ENCODE measurements at regions of chr16 and their contacts with region 1.

Region 1: DNA sequence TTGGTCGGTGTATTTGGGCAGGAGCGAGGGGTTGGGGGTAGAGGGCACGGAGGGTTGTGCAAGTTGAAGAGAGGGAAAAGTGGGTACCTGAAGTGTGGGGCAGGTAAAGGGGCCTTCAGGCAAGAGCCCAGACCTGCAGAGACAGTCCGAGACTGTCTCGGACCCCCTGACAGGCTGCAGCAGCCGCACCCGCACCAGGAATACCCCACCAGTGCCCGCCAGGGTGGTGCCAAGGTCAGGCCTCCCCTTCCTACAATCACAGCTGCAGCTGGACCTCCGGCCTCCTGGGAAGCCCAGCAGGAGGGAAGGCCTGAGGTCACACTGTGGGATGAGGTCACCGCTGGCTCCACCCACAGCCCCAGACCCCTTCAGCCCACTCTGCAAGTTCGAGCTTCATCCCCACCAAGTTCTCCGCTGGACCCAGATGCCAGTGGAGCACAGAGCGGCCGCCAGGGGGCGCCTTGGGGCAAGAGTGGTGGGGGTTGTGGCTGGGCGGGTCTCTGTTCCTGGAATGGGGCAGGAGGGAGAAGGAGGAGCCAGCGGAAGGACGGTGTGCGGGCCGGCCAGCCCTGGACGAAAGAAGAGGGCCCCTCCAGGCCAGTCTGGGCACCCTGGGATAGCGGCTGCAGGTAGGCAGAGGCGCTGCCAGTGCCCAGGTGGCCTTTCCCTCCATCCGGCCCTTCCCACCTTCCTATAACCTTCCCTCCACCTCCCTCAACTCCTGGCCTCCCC is at the start of gene HSD3B7:
- DNase-seq: peak; percentile 95
- ATAC-seq: peak; percentile 85
- H3K4me3 Mint-ChIP-seq: peak within 1 kb of the TSS; percentile 61
- H3K27ac Mint-ChIP-seq: 0 out of 2 replicates have a peak within 1 kb of the TSS, but pooled peaks have one; percentile 27
- H3K4me1 Mint-ChIP-seq: peaks cover 6% of the 10 kb centered on the region
- H3K27me3 Mint-ChIP-seq: no peaks in the 10 kb centered on the region
- CTCF ChIP-seq: peak; percentile 97
- total RNA-seq, gene HSD3B7: 4.1 to 4.5 TPM (median 4.5 TPM) in 3 replicates

Region 2: DNA sequence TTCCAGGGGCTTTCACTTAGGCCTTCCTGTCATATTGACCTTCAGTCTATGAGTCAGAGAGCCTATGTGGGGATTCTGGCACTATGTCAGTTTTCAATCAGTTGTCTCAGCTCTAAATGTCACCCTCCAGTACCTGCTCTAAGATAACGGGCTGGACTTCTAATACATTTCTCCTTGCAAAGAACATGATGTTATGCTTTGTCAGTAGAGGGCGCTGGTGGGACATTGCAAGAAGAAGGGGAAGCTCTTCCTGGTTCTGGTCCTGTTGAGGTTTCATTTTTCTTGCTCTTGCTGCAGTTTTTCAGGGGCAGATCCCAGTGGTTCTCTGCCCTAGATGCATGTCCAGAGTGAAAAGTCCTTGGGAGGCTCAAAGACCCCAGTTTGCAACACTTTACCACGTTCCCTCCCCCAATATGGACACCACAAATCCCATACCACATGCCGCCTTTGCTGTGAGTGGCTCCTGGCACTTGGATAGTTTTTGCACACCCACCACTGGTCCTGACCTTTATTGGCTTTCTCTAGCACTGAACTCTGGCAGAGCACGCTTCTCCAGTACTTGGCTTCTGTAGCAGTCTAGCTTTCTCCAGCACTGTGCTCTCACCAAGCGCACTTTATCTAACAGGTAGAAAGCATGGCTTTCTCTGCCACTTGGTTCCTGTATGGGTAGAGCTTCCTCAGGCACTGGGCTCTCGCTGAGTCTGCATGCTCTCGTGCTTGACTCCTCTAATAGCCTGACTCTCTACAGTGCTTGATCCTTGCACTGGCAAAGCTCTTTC is 140.0 kb before region 1 on chr16:
- CTCF ChIA-PET with region 1: no interaction called
- POLR2A ChIA-PET with region 1: no interaction called
- DNase-seq: peak; percentile 78
- ATAC-seq: peak; percentile 82
- H3K4me3 Mint-ChIP-seq: no peak overlapping the region
- H3K27ac Mint-ChIP-seq: no peak overlapping the region
- H3K4me1 Mint-ChIP-seq: peaks cover 4% of the 10 kb centered on the region
- H3K27me3 Mint-ChIP-seq: peaks cover 34% of the 10 kb centered on the region
- CTCF ChIP-seq: peak; percentile 56; the same call in 1 of the 2 replicates

Region 3: GRCh38 chr16:30912794-30913412 is 71.9 kb before region 1 on chr16:
- CTCF ChIA-PET with region 1: no interaction called
- POLR2A ChIA-PET with region 1: no interaction called
- DNase-seq: no peak
- ATAC-seq: no peak
- H3K4me3 Mint-ChIP-seq: no peak overlapping the region
- H3K27ac Mint-ChIP-seq: no peak overlapping the region
- H3K4me1 Mint-ChIP-seq: peaks cover 10% of the 10 kb centered on the region
- H3K27me3 Mint-ChIP-seq: no peaks in the 10 kb centered on the region; the same call in 1 of the 2 replicates
- CTCF ChIP-seq: no peak

Region 4: DNA sequence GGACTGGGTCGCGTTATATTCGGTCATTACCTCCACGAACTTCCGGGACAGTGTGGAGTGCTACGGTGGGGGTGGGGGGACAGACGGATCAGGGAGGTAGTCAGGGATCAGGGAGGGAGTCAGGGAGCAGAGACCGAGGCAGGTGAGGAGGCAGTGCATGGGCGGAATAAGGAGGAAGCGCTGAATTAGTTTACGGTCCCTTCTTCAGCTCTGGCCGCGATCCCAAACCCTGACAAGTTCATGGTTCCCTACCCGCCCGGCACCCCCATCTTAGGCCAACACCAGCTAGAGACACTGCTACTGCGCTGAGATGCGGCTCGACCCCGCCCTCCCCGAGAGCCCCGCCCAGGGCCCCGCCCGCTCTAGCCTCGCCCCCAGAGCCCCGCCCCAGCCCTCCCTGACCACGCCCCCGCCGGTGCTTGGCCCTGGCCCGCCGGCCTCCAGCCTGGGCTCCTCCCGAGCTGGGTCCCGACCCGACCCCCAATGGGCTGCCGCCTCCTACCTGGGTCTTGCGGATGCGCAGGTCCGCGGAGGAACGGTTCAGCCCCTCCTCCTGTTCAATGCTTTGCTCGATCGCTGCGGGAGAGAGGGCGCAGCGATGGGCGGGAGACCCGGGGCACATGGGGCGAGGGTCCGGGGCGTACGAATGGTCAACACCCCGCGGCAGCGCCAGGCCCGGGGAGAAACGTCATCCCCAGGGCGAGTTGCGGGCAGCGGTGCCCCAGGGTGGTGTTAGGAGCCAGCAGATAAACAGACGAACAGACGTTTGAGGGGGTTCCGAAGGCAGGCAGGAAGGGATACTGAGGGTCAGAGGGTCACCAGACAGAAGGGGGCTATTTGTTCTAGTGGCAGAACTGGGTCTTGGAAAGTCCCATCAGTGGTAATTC is 12.4 kb after region 1 on chr16:
- CTCF ChIA-PET with region 1: interaction called, 79 read pairs
- POLR2A ChIA-PET with region 1: interaction called, 6 read pairs
- DNase-seq: peak; percentile 87
- ATAC-seq: peak; percentile 89
- H3K4me3 Mint-ChIP-seq: peak overlapping the region; percentile 70
- H3K27ac Mint-ChIP-seq: no peak overlapping the region; the same call in 1 of the 2 replicates
- H3K4me1 Mint-ChIP-seq: peaks cover 16% of the 10 kb centered on the region
- H3K27me3 Mint-ChIP-seq: peaks cover 7% of the 10 kb centered on the region; the same call in 1 of the 2 replicates
- CTCF ChIP-seq: no peak

Region 5: DNA sequence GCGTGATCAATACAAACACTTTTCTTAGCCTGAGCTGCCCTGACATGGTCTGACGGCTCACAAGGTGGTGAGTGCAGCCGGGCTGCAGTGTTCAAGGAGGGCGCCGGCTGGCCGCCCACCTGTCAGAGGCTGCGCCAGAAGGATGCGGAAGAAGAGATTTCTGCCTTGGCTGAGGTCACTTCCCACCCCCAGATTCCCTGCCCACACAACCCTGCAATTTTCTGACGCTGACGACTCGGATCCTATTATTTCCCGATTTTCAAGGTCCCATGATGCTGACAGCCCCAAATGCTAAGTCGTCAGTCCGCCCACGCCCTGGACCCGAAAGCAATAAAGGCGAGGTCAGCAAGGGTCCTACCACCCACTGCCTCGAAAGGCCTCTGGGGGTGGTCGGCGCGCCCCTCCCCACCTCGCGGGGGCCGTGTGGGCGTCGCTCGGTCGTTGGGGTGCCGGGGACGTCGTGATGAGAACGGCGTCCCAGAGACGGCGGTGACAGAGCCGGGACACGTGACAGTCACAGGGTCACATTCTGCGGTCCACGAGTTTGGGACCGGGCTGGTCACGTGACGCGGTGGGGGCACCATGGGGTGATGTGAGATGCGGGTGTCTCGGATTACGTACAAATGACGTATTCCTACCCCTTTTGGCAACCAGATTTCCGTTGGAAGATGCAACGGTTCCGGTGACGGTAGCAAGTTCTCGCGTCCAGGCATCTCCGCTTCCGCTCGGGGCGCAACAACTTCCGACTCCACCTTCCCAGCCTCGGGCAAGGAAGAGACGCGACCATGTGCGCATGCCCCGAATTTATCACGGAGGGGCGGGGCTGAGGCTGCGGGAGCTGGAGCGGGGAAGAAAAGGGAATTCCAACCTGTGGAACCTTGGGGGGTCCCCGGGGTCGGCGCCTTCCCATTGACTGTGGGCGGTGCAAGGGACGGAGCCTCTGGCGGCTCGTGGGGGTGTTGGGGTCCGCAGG is 48.2 kb after region 1 on chr16 and contains the start of gene STX4:
- CTCF ChIA-PET with region 1: interaction called, 16 read pairs
- POLR2A ChIA-PET with region 1: interaction called, 3 read pairs
- DNase-seq: peak; percentile 96
- ATAC-seq: peak; percentile 86
- H3K4me3 Mint-ChIP-seq: peak within 1 kb of the TSS; percentile 90
- H3K27ac Mint-ChIP-seq: peak within 1 kb of the TSS; percentile 70
- H3K4me1 Mint-ChIP-seq: no peaks in the 10 kb centered on the region
- H3K27me3 Mint-ChIP-seq: no peaks in the 10 kb centered on the region; the same call in 1 of the 2 replicates
- CTCF ChIP-seq: no peak
- total RNA-seq, gene STX4: 31.3 to 38.4 TPM (median 32.5 TPM) in 3 replicates

Region 6: DNA sequence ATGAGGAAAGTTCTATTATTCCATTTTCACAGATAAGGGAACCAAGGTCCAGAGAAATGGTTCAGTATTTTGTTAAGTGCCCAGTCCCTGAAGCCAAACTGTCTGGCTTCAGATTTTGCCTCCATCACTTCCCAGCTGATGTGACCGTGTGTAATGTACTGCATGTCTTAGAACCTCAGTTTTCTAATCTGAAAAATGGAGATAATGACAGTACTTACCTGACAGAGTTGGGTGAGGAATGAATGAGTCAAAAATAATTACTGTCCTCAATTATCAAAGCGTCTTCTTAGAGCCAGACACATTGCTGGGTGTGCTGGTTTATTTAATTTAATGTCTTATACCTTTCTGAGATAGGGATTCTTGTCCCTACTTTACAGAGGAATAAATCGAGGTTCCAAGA is 82.5 kb after region 1 on chr16:
- CTCF ChIA-PET with region 1: interaction called, 10 read pairs
- POLR2A ChIA-PET with region 1: no interaction called
- DNase-seq: no peak
- ATAC-seq: no peak
- H3K4me3 Mint-ChIP-seq: no peak overlapping the region
- H3K27ac Mint-ChIP-seq: no peak overlapping the region
- H3K4me1 Mint-ChIP-seq: peaks cover 8% of the 10 kb centered on the region
- H3K27me3 Mint-ChIP-seq: no peaks in the 10 kb centered on the region
- CTCF ChIP-seq: no peak

Region 7: GRCh38 chr16:31117391-31118197 is 132.8 kb after region 1 on chr16 and contains the start of gene KAT8:
- CTCF ChIA-PET with region 1: interaction called, 10 read pairs
- POLR2A ChIA-PET with region 1: interaction called, 4 read pairs
- DNase-seq: peak; percentile 96
- ATAC-seq: peak; percentile 93
- H3K4me3 Mint-ChIP-seq: peak within 1 kb of the TSS; percentile 83
- H3K27ac Mint-ChIP-seq: peak within 1 kb of the TSS; percentile 80
- H3K4me1 Mint-ChIP-seq: peaks cover 16% of the 10 kb centered on the region
- H3K27me3 Mint-ChIP-seq: no peaks in the 10 kb centered on the region
- CTCF ChIP-seq: no peak
- total RNA-seq, gene KAT8: 65.7 to 70.8 TPM (median 69.8 TPM) in 3 replicates

Region 8: GRCh38 chr16:31333686-31334649 is 349.1 kb after region 1 on chr16:
- CTCF ChIA-PET with region 1: interaction called, 10 read pairs
- POLR2A ChIA-PET with region 1: no interaction called
- DNase-seq: peak; percentile 54
- ATAC-seq: peak; percentile 86
- H3K4me3 Mint-ChIP-seq: no peak overlapping the region
- H3K27ac Mint-ChIP-seq: no peak overlapping the region
- H3K4me1 Mint-ChIP-seq: peaks cover 17% of the 10 kb centered on the region
- H3K27me3 Mint-ChIP-seq: peaks cover 61% of the 10 kb centered on the region
- CTCF ChIP-seq: no peak